ENCODE measurements at regions of chr15 and their contacts with region 1.

Region 1: DNA sequence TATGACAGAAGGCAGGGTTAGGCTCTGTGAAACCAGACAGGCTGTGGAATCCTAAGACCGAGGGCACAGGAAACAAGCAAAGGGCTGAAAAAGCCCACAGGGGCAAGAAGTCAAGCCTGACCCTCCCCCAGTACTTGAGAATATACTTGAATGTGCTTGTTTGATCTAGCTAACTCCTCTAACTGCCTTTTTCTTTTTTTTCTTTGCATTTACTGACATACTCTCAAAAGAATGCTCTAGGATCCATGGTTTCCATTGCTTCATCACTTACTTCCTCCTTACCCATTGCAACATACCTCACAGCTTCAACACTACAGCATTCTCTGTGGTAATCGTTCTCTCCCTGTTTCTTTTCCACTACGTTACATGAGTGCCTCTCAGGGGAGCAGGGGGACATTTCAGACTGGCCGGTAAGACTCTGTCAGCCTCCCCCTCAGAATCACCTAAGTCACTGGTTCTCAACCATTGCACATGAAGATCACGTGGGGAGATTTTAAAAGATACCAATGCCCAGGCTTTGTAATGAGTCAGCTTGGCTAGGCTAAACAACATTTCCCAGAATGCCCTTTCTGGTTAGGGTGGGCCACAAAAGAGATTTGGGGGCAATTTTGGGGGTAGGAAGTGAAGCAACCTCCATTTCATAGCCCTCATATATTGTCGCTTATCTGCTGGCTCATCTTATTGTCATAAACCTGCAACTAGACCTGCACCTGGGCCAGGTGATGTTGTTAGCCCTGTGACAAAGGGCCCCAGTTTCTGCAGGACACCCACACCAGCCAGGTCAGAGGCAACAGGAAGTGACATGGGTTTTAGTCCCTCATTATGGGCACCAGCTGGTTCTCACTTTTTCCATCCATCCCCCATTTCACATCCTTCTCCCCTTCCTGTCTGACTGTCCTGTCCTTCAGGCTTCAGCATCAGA is 24.6 kb upstream of the RSL24D1 start:
- DNase-seq: peak in 1 of 2 donors; percentile 66
- H3K4me3 ChIP-seq: no peak overlapping the region
- H3K27ac ChIP-seq: peak overlapping the region; percentile 54 to 88 (median 68)
- H3K4me1 ChIP-seq: peaks cover 21 to 93% (median 26%) of the 10 kb centered on the region in 4 donors
- H3K27me3 ChIP-seq: no peaks in the 10 kb centered on the region
- CTCF ChIP-seq: no peak
- EP300 ChIP-seq: no peak
- POLR2A ChIP-seq: no peak

Region 2: DNA sequence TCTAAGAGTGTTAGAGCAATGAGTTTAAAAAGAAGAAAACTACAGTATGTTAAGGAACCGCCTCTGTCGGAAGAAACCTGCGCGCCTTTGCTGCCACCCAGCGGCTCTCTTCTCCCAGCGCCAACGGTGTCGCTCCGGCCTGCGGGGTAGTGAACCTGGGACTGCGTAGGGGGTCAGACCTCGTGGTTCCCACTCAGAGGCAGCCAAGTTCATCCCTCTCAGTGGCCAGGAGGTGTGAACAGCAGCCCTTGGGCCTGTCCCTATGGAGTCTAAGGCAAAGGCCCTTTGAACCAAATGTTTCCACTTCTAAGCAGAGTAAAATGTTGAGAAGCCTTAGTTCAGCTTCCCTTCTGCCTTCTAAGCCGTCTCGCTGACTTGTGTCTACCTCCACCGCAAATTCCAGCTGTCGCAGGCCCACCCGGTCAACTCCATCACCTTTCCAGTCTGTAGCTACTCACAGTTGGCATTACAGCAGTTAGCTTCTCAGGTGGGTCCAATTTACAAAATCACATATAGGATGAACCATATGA is 69.2 kb after region 1 on chr15:
- intact Hi-C with region 1: loop called (anchors 5 kb)
- DNase-seq: peak; percentile 89 to 94
- H3K4me3 ChIP-seq: peak overlapping the region; percentile 74 to 95 (median 82)
- H3K27ac ChIP-seq: peak overlapping the region; percentile 64 to 98 (median 97)
- H3K4me1 ChIP-seq: peaks cover 14 to 41% (median 26%) of the 10 kb centered on the region in 4 donors
- H3K27me3 ChIP-seq: no peaks in the 10 kb centered on the region
- CTCF ChIP-seq: peak in 5 of 7 experiments; percentile 63 to 88 (median 83)
- EP300 ChIP-seq: no peak
- POLR2A ChIP-seq: no peak

Region 3: DNA sequence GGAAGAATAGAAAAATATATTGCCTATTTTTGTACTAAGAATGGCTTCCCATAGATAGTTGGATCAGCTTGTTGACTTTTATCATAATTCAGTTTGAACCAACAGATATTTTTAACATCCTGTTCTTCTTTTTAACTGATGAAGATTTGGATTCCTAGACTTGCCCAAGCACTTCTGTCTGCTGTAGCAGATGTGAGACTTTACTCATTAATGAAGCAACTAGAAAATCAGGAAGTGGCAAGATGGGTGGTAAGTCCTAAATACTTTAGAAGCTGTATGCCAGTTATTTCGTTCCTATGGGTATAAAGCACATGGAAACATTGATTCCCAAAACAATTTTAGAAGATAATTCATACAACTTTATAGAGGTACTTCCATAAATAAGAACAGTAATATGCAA is 106.0 kb after region 1 on chr15:
- intact Hi-C with region 1: no loop called
- DNase-seq: no peak
- H3K4me3 ChIP-seq: no peak overlapping the region
- H3K27ac ChIP-seq: no peak overlapping the region
- H3K4me1 ChIP-seq: no peaks in the 10 kb centered on the region
- H3K27me3 ChIP-seq: no peaks in the 10 kb centered on the region
- CTCF ChIP-seq: no peak
- EP300 ChIP-seq: no peak
- POLR2A ChIP-seq: no peak

Region 4: GRCh38 chr15:55434989-55435825 is 213.9 kb after region 1 on chr15:
- intact Hi-C with region 1: loop called (anchors 10 kb)
- DNase-seq: peak in 1 of 2 donors; percentile 76
- H3K4me3 ChIP-seq: no peak overlapping the region
- H3K27ac ChIP-seq: no peak overlapping the region
- H3K4me1 ChIP-seq: no peaks in the 10 kb centered on the region
- H3K27me3 ChIP-seq: no peaks in the 10 kb centered on the region
- CTCF ChIP-seq: peak in 5 of 7 experiments; percentile 20 to 52 (median 41)
- EP300 ChIP-seq: no peak
- POLR2A ChIP-seq: no peak

Measured in stomach (tissue), 19 donors.